Thyroid gland (tissue), 4 donors: ENCODE measurements at regions of chr16 and their contacts with region 1.

Region 1: GRCh38 chr16:68704232-68704867 is 32.7 kb upstream of the CDH1 start:
- DNase-seq: peak; percentile 89 to 94
- H3K4me3 ChIP-seq: no peak overlapping the region
- H3K27ac ChIP-seq: no peak overlapping the region
- H3K4me1 ChIP-seq: peaks cover 5 to 12% of the 10 kb centered on the region in 2 donors
- H3K27me3 ChIP-seq: no peaks in the 10 kb centered on the region
- CTCF ChIP-seq: peak; percentile 65 to 96 (median 78)
- POLR2A ChIP-seq: no peak

Region 2: DNA sequence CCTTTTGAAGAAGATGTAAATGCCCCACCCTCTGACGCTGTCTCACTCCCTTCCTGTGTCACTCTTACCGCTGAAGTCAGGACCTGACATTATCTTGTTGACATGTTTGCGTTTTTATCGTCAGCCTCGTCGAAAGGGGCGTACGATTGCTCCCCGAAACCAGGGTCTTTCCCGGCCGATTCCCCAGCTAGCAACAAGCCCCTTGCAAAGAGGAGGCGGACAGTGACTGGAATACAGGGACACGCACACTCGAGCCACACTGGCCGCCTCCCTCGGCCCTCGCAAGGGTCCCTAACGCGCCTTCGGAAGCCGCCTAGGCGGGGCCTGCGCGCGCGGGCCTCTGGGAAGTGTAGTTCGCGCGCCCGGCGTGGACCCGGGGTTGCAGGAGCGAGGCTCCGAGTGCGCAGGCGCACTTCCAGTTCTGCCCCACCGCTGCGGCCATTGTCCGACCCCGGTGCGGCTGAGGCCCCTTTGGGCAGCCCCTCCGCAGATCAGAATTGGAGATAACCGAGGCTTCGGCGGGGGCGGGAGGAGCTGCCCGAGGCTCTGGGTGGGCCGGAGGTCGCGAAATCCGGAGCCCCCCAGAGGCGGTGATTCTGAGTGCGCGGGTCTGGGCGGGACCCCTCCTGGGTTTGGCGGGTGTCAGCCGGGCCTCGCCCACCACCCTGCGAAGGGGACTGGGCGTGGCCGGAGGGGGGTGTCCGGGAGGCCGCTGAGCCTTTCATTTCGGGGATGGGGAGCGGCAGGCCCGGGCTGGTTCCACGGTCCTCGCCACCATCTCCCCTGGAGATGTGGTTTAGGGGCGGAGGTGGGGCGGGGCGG is 165.3 kb before region 1 on chr16 and contains the start of gene ZFP90:
- intact Hi-C with region 1: loop called (anchors 10 kb)
- DNase-seq: peak; percentile 88 to 89
- H3K4me3 ChIP-seq: peak within 1 kb of the TSS; percentile 89 to 100 (median 89)
- H3K27ac ChIP-seq: peak within 1 kb of the TSS; percentile 50 to 90 (median 67)
- H3K4me1 ChIP-seq: peaks cover 0 to 6% of the 10 kb centered on the region in 2 donors
- H3K27me3 ChIP-seq: no peaks in the 10 kb centered on the region
- CTCF ChIP-seq: no peak
- POLR2A ChIP-seq: peak in 1 of 2 donors; percentile 54
- total RNA-seq, gene ZFP90: 34.3 to 46.4 (median 38.7) TPM

Region 3: GRCh38 chr16:68590201-68590994 is 114.0 kb before region 1 on chr16:
- intact Hi-C with region 1: loop called (anchors 10 kb)
- DNase-seq: peak; percentile 65 to 73
- H3K4me3 ChIP-seq: no peak overlapping the region
- H3K27ac ChIP-seq: no peak overlapping the region
- H3K4me1 ChIP-seq: peaks cover 0 to 6% of the 10 kb centered on the region in 2 donors
- H3K27me3 ChIP-seq: no peaks in the 10 kb centered on the region
- CTCF ChIP-seq: peak in 5 of 6 experiments; percentile 20 to 74 (median 55)
- POLR2A ChIP-seq: no peak

Region 4: DNA sequence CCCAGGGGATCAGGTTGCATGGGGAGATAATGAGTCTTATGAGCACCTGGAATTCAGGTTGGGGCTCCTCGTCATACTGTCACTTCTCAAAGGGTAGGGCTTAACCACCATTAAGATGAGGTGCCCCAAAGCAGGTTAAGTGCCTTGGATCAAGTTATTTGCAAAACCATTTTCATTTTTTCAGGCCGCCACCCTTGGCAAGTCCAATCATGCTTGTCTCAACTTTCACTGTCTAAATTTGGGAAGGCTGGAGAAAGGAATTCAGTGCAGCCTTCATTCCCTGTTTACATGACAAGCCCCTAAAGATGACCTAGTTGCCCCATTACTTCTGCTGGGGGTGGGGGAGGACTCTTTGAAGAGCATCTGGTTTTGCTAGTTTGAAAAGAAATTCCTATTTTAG is 94.1 kb after region 1 on chr16:
- intact Hi-C with region 1: loop called (anchors 5 kb)
- DNase-seq: no peak
- H3K4me3 ChIP-seq: no peak overlapping the region
- H3K27ac ChIP-seq: peak overlapping the region; percentile 2 to 63 (median 29)
- H3K4me1 ChIP-seq: peaks cover 13 to 27% of the 10 kb centered on the region in 2 donors
- H3K27me3 ChIP-seq: no peaks in the 10 kb centered on the region
- CTCF ChIP-seq: no peak
- POLR2A ChIP-seq: no peak

Region 5: DNA sequence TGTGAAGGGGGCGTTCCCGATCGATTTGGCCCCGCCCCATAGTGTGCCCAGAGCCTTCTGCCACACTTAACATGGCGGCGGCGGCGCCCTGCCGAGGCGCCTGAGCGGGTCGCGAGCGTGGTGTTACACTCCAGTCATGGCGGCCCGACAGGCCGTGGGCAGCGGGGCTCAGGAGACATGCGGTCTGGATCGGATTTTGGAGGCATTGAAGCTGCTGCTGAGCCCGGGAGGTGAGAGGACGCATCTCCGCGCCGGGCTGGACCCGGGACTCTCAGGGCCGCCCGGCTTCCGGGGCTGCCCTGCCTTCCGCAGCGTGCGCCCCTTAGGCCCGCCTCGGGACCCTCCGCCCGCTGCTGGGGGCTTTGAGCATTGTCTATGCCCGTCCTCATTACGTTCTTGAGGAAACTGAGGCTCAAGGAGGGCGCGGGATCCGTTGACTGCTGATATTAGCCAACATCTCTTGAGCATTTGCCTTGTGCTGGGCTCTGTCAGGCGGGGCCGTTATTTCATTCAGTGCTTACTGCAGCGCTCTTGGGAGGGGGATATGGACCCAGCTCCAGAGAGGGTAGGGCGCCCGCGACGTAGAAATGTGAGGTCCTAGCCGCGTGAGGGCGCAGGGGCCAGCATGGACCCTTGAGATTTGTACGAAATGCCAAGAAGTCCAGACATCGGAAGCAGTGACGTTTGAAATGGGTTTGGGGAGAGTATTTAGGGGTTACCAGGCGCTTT is 139.3 kb after region 1 on chr16 and contains the start of gene TANGO6:
- intact Hi-C with region 1: no loop called
- DNase-seq: peak; percentile 83 to 86
- H3K4me3 ChIP-seq: peak within 1 kb of the TSS; percentile 39 to 79 (median 64)
- H3K27ac ChIP-seq: peak within 1 kb of the TSS; percentile 10 to 88 (median 78)
- H3K4me1 ChIP-seq: peaks cover 4 to 9% of the 10 kb centered on the region in 2 donors
- H3K27me3 ChIP-seq: no peaks in the 10 kb centered on the region
- CTCF ChIP-seq: peak in 2 of 6 experiments; percentile 7 to 31
- POLR2A ChIP-seq: peak in 1 of 2 donors; percentile 46
- total RNA-seq, gene TANGO6: 16.7 to 24.4 (median 20.2) TPM